OCI-LY7 (cell line): ENCODE measurements at regions of chr10 and their contacts with region 1.

Region 1: DNA sequence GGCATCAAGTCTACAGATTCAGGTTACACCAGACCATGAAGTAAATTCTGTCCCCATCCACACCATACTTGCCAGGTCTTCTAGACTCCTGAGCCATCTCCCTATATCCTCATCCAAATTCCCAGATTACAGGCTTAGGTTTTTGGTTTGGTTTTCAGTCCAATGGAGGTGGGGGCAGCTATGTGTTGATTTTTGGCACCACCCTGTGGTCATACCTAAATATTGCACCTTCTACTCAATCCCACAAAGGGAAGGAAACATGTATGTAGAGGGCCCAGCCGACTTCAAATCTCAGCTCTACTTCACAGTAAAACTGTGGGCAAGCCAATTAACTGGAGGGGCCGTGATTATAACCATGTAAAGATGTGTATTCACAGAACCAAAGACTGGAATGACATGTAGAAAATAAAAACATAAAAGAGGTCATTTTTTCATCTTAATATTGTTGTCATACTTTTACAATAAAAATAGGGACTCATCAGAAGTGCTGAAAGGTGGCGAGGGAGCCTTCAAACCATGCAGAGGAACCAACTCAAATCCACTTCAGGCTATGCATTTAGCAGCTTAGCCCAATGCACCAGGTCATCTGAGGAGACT is 19.8 kb downstream of the ERCC6 start:
- DNase-seq: peak; percentile 53
- H3K4me3 ChIP-seq: no peak overlapping the region
- H3K27ac ChIP-seq: no peak overlapping the region
- H3K4me1 ChIP-seq: no peaks in the 10 kb centered on the region
- CTCF ChIP-seq: peak; percentile 90

Region 2: DNA sequence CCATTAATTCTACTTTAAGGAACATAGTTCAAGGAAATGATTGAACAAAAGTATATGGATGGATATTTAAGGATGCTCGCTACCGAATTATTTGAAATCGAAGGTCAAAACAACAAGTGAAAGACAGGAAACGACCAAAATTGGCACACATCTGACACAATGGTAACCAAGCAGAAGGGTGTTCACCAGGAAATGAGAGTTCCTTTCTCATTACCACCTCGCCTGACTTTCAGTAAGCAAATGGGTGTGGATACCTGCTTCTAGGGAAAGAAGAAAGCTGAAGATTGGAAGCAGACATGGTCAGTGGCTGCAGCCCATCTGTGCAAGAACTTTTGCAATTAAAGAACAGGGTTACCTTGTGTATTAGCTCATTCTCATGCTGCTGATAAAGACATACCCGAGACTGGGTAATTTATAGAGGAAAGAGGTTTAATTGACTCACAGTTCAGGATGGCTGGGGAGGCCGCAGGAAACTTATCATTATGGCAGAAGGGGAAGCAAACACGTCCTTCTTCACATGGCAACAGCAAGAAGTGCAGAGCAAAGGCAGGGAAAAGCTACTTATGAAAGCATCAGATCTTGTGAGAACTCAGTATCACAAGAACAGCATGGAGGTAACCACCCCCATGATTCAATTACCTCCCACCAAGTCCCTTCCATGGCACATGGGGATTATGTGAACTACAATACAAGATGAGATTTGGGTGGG is 324.7 kb before region 1 on chr10:
- CTCF ChIA-PET with region 1: no interaction called
- POLR2A ChIA-PET with region 1: no interaction called
- intact Hi-C with region 1: loop called (anchors 10 kb)
- DNase-seq: peak; percentile 41
- H3K4me3 ChIP-seq: peak overlapping the region; percentile 30
- H3K27ac ChIP-seq: no peak overlapping the region
- H3K4me1 ChIP-seq: peaks cover 38% of the 10 kb centered on the region
- CTCF ChIP-seq: no peak